ENCODE measurements at regions of chr10 and their contacts with region 1.

Region 1: DNA sequence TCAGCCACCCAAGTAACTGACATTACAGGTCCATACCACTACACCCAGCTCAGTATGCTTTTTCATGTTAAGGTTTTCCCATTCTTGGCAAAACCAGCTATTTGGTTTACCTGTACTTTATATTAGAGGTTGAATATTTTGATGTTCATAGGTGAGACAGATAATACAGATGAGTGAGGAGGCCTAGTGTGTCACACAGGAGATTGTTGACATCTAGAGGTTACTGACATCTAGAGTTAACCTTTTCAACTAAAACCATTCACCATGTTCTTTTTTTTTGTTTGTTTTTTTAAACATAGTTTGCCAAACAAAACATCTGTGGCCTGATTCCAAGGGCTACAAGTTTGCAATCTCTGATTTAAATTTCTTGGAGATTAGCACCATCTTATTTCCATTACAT is 8.0 kb downstream of the GHITM start:
- DNase-seq: no peak
- ATAC-seq: no peak
- H3K4me3 ChIP-seq: no peak overlapping the region
- H3K27ac ChIP-seq: no peak overlapping the region
- H3K4me1 ChIP-seq: no peaks in the 10 kb centered on the region; the same call in 2 of the 3 replicates
- CTCF ChIP-seq: no peak
- EP300 ChIP-seq: no peak
- POLR2A ChIP-seq: no peak
- RAD21 ChIP-seq: no peak

Region 2: GRCh38 chr10:84160663-84161362 is 13.5 kb after region 1 on chr10:
- CTCF ChIA-PET with region 1: interaction called, 11 read pairs
- POLR2A ChIA-PET with region 1: interaction called, 8 read pairs
- DNase-seq: no peak
- ATAC-seq: no peak
- H3K4me3 ChIP-seq: no peak overlapping the region
- H3K27ac ChIP-seq: no peak overlapping the region
- H3K4me1 ChIP-seq: no peaks in the 10 kb centered on the region
- CTCF ChIP-seq: no peak
- EP300 ChIP-seq: no peak
- POLR2A ChIP-seq: no peak
- RAD21 ChIP-seq: no peak

Region 3: GRCh38 chr10:84205049-84205852 is 57.9 kb after region 1 on chr10:
- CTCF ChIA-PET with region 1: interaction called, 15 read pairs
- POLR2A ChIA-PET with region 1: no interaction called
- DNase-seq: peak; percentile 61 to 62
- ATAC-seq: peak; percentile 65 to 91
- H3K4me3 ChIP-seq: no peak overlapping the region
- H3K27ac ChIP-seq: no peak overlapping the region
- H3K4me1 ChIP-seq: no peaks in the 10 kb centered on the region
- CTCF ChIP-seq: peak; percentile 52; the same call in 2 of the 3 replicates
- EP300 ChIP-seq: no peak
- POLR2A ChIP-seq: no peak
- RAD21 ChIP-seq: peak; percentile 54 to 72

Region 4: DNA sequence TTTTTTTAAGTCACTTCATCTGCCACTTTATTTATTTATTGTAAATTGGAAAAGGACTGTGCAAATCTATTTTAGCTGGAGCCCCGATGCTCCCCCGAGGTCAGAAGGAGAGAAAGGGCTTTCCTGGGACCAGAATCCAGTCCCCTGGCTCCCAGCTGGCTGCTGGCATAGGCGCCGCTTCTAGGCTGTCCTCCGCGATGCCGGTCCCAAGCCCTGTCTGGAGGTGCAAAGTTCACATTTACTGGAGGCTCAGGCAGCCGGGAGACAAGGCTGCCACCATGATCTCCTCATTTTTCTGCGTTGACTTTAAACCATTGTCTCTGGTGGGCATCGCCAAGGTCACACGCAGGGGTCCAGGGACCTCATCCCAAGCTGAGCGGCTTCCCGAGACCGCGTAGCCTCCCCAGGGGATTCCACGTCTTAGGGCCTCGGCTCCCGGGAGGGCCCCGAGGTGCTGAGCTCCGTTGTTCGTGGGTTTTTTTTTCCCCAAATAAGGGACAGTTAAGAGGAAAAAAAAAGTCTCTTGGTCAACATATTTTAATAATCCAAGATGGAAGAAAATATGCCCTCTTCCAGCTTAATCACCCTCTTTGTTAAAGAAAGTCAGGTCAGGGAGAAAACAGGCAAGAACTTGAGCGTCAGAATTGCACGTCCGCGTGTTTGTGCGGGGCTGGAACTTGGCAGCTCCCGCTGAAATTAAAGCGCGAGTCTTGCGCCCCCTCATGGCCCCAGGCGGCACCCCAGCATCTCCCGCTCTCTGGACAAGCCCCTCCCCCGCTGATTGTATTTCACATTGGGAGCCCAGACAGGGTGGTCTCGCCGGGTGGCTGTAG is 109.4 kb after region 1 on chr10:
- CTCF ChIA-PET with region 1: interaction called, 10 read pairs
- POLR2A ChIA-PET with region 1: no interaction called
- DNase-seq: peak; percentile 44 to 67
- ATAC-seq: peak; percentile 70 to 88; a peak in 5 of 6 replicates
- H3K4me3 ChIP-seq: peak overlapping the region; percentile 31; the same call in 2 of the 3 replicates
- H3K27ac ChIP-seq: no peak overlapping the region
- H3K4me1 ChIP-seq: 0 out of 3 replicates have a peak, but pooled peaks cover 4% of the 10 kb centered on the region
- CTCF ChIP-seq: peak; percentile 56
- EP300 ChIP-seq: no peak
- POLR2A ChIP-seq: no peak
- RAD21 ChIP-seq: peak; percentile 48 to 50; a peak in 4 of 5 replicates

Measured in A549 (cell line).